HAP-1 (cell line): ENCODE measurements at regions of chr2 and their contacts with region 1.

Region 1: GRCh38 chr2:181077128-181077709 is 96.8 kb downstream of the UBE2E3 start:
- DNase-seq: peak in 1 of 2 experiments; percentile 62
- H3K4me3 ChIP-seq: no peak overlapping the region
- H3K4me1 ChIP-seq: no peaks in the 10 kb centered on the region
- H3K27me3 ChIP-seq: no peaks in the 10 kb centered on the region

Region 2: GRCh38 chr2:180191432-180192124 is 885.6 kb before region 1 on chr2:
- in situ Hi-C with region 1: no loop called
- DNase-seq: peak; percentile 48 to 49
- H3K4me3 ChIP-seq: no peak overlapping the region
- H3K4me1 ChIP-seq: peaks cover 74% of the 10 kb centered on the region
- H3K27me3 ChIP-seq: no peaks in the 10 kb centered on the region

Region 3: GRCh38 chr2:180952082-180952481 is 125.1 kb before region 1 on chr2:
- in situ Hi-C with region 1: no loop called
- DNase-seq: no peak
- H3K4me3 ChIP-seq: no peak overlapping the region
- H3K4me1 ChIP-seq: no peaks in the 10 kb centered on the region
- H3K27me3 ChIP-seq: no peaks in the 10 kb centered on the region

Region 4: GRCh38 chr2:181348107-181348837 is 271.1 kb after region 1 on chr2:
- in situ Hi-C with region 1: no loop called
- DNase-seq: no peak
- H3K4me3 ChIP-seq: no peak overlapping the region
- H3K4me1 ChIP-seq: no peaks in the 10 kb centered on the region
- H3K27me3 ChIP-seq: no peaks in the 10 kb centered on the region

Region 5: GRCh38 chr2:181715033-181715630 is 637.9 kb after region 1 on chr2:
- in situ Hi-C with region 1: loop called (anchors 25 kb)
- DNase-seq: peak; percentile 77 to 83
- H3K4me3 ChIP-seq: no peak overlapping the region
- H3K4me1 ChIP-seq: no peaks in the 10 kb centered on the region
- H3K27me3 ChIP-seq: no peaks in the 10 kb centered on the region